Activated CD4-positive, alpha-beta T cell treated with anti-CD3 and anti-CD28 coated beads for 36 hours (primary cell): ENCODE measurements at regions of chr9 and their contacts with region 1.

Region 1: DNA sequence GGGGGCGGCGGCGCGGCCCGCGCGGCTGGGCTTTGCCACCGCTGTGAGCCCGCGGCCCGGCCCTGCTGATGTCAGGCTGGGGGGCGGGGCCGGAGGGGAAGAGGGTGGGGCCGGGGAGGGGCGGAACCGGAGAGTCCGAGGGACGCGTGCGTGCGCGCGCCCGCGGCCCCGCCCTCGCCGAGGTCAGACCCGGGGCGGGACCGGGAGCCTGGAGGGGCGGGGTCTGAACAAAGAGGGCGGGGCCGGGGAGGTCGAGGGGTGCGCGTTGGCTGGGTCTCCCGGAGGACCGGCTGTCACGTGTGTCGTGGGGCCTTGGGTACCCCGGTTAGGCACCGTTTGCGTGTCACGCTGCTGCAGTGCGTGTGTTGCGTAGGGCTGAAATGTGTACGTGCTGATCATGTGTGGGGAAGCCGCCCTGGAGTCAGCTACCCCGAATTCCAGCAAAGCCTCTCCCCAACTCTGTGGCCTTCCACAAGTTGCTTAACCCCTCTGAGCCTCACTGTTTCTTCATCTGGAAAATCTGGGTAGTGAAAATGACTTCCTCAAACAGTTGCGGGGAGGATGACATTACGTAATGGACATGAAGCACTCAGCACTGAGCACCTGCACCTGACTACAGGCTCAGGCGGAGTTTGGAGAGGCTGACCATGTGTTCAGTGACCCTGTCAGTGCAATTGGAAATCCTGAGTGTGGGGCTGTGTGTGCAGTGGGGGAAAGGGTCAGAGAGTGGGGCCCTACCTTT is at the start of gene RALGDS:
- DNase-seq: peak; percentile 96
- ATAC-seq: peak; percentile 82
- H3K4me3 Mint-ChIP-seq: peak within 1 kb of the TSS; percentile 71
- H3K27ac Mint-ChIP-seq: peak within 1 kb of the TSS; percentile 80
- H3K4me1 Mint-ChIP-seq: peaks cover 58% of the 10 kb centered on the region
- H3K27me3 Mint-ChIP-seq: no peaks in the 10 kb centered on the region
- total RNA-seq, gene RALGDS: 65.1 to 78.6 TPM

Region 2: GRCh38 chr9:132694157-132694556 is 427.2 kb before region 1 on chr9:
- CTCF ChIA-PET with region 1: no interaction called
- POLR2A ChIA-PET with region 1: no interaction called
- intact Hi-C with region 1: no loop called
- DNase-seq: peak; percentile 18
- ATAC-seq: peak; percentile 87
- H3K4me3 Mint-ChIP-seq: no peak overlapping the region
- H3K27ac Mint-ChIP-seq: no peak overlapping the region
- H3K4me1 Mint-ChIP-seq: no peaks in the 10 kb centered on the region
- H3K27me3 Mint-ChIP-seq: peaks cover 3% of the 10 kb centered on the region

Region 3: GRCh38 chr9:133030317-133031129 is 90.8 kb before region 1 on chr9 and contains the start of gene GTF3C5:
- CTCF ChIA-PET with region 1: interaction called, 3 read pairs
- POLR2A ChIA-PET with region 1: interaction called, 3 read pairs
- intact Hi-C with region 1: loop called in 1 of 2 experiments (anchors 1 kb)
- DNase-seq: peak; percentile 95
- ATAC-seq: peak; percentile 98
- H3K4me3 Mint-ChIP-seq: peak within 1 kb of the TSS; percentile 94
- H3K27ac Mint-ChIP-seq: peak within 1 kb of the TSS; percentile 95
- H3K4me1 Mint-ChIP-seq: peaks cover 41% of the 10 kb centered on the region
- H3K27me3 Mint-ChIP-seq: no peaks in the 10 kb centered on the region
- total RNA-seq, gene GTF3C5: 81.3 to 84.5 TPM

Region 4: DNA sequence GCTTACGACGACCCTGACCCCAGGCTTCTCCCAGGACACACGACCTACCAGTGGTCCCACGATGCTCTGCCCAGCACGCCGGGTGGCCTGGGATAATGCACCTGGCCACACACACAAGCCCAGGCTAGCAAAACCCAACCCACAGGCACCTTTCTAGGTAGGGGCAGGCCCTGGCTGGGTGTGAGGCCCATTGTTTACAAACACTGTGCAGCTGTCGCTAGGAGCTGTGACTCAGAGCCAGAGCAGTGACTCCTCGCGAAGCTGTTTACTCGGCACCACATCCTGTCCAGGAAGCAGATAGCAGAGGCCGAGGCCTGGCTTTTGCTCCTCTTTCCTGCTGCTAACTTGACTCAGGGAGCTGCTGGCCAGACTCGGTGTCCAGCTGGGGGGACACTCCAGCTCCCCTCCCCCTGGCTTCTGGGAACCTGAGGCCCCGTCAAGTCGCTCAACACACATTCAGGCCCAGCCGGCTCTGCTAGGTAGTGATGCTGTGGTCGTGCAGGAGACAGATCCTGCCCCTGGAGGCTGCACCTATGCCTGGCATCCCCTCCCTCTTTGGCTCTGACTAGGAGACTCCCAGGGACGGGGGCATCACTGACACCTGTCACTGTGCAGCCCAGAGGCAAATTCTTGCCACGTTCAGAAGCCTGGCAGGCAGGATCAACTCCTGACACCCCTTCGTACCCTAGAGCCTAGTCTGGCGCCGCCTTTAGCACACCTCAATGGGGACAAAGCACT is 12.5 kb after region 1 on chr9:
- CTCF ChIA-PET with region 1: interaction called, 6 read pairs
- POLR2A ChIA-PET with region 1: interaction called, 11 read pairs
- intact Hi-C with region 1: loop called in 1 of 2 experiments (anchors 1 kb)
- DNase-seq: peak; percentile 95
- ATAC-seq: peak; percentile 84
- H3K4me3 Mint-ChIP-seq: peak overlapping the region; percentile 41
- H3K27ac Mint-ChIP-seq: peak overlapping the region; percentile 98
- H3K4me1 Mint-ChIP-seq: peaks cover 75% of the 10 kb centered on the region
- H3K27me3 Mint-ChIP-seq: no peaks in the 10 kb centered on the region

Region 5: GRCh38 chr9:133144137-133144903 is 23.0 kb after region 1 on chr9:
- CTCF ChIA-PET with region 1: interaction called, 139 read pairs
- POLR2A ChIA-PET with region 1: interaction called, 6 read pairs
- intact Hi-C with region 1: loop called (anchors 1 kb)
- DNase-seq: peak; percentile 94
- ATAC-seq: peak; percentile 71
- H3K4me3 Mint-ChIP-seq: peak overlapping the region; percentile 57
- H3K27ac Mint-ChIP-seq: peak overlapping the region; percentile 82
- H3K4me1 Mint-ChIP-seq: peaks cover 62% of the 10 kb centered on the region
- H3K27me3 Mint-ChIP-seq: no peaks in the 10 kb centered on the region

Region 6: DNA sequence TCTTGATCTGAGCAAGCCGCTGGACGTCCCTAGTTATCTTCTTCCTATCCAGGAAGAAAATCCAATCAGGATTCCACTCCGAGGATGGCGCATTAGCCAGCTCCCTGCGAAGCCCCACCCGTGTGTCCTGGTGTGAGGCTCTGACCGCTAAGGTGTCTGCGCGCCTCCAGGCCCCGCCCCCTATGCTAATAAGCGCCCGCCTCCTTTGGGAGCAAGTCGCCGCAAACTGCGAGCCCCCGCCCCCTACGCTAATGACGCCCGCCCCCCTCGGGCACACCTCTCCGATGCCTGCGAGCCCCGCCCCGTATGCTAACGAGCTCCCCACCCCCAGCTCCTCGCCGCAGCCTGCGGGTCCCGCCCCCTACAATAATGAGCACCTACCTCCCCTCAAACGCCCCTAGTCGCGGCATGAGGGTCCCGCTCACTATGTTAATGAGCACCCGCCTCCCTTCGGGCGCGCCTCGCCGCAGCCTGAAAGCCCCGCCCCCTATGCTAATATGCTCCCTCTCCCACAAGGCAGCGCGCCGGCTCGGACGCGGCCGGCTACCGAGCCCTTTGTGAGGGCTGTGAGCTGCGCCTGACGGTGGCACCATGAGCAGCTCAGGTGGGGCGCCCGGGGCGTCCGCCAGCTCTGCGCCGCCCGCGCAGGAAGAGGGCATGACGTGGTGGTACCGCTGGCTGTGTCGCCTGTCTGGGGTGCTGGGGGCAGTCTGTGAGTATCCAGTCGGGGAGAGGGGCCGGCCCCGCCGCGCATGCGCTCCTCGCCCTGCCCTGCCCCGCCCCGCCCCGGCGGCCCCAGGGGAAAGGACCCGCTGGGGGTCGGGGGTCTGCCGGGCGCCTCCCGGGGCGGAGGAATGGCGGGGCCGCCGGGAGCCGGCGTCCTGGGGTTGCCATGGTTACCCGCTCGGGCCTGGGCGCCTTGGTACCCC is 338.4 kb after region 1 on chr9 and contains the start of gene CACFD1:
- CTCF ChIA-PET with region 1: no interaction called
- POLR2A ChIA-PET with region 1: no interaction called
- intact Hi-C with region 1: loop called in 1 of 2 experiments (anchors 1 kb)
- DNase-seq: peak; percentile 96
- ATAC-seq: peak; percentile 88
- H3K4me3 Mint-ChIP-seq: peak within 1 kb of the TSS; percentile 74
- H3K27ac Mint-ChIP-seq: peak within 1 kb of the TSS; percentile 42
- H3K4me1 Mint-ChIP-seq: no peaks in the 10 kb centered on the region
- H3K27me3 Mint-ChIP-seq: no peaks in the 10 kb centered on the region
- total RNA-seq, gene CACFD1: 0.87 to 0.90 TPM

Region 7: DNA sequence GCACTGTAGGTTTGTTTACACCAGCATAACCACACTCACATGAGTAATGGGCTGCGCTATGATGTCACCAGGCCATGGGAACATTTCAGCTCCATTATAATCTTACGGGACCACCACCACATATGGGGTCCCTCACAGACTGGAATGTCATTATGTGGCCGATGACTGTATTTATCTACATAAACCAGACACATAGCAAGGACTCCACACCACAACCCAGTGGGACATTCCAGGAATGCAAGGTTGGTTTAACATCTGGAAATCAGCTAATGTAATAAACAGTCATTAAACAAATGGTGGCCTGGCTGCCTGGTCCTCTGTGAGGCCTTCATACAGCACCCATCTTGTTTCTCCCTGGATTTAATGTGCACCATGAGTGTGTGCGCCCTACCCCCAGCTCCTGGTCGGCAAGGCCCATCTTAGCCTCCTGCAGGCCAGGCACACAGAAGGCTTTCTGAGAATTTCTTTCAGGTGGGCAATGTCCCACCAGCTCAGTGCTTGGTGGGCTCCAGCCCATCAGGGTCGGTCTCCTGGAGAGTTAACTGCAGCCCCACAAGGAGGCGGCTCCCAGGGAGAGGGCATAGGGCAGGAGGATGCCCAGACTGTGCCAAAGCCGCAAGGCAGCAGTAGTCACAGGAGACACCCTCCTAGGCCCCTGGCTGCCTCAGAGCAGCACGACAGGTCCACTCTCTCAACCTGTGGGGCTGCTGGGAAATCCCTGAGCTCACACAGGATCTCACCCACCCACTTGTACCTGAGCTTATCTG is 652.7 kb after region 1 on chr9:
- CTCF ChIA-PET with region 1: no interaction called
- POLR2A ChIA-PET with region 1: no interaction called
- intact Hi-C with region 1: no loop called
- DNase-seq: no peak
- ATAC-seq: no peak
- H3K4me3 Mint-ChIP-seq: no peak overlapping the region
- H3K27ac Mint-ChIP-seq: no peak overlapping the region
- H3K4me1 Mint-ChIP-seq: no peaks in the 10 kb centered on the region
- H3K27me3 Mint-ChIP-seq: no peaks in the 10 kb centered on the region

Region 8: GRCh38 chr9:134135343-134136118 is 1014.2 kb after region 1 on chr9 and contains the start of gene WDR5:
- CTCF ChIA-PET with region 1: no interaction called
- POLR2A ChIA-PET with region 1: no interaction called
- intact Hi-C with region 1: loop called in 1 of 2 experiments (anchors 5 kb)
- DNase-seq: peak; percentile 95
- ATAC-seq: peak; percentile 78
- H3K4me3 Mint-ChIP-seq: peak within 1 kb of the TSS; percentile 98
- H3K27ac Mint-ChIP-seq: peak within 1 kb of the TSS; percentile 90
- H3K4me1 Mint-ChIP-seq: peaks cover 31% of the 10 kb centered on the region
- H3K27me3 Mint-ChIP-seq: no peaks in the 10 kb centered on the region
- total RNA-seq, gene WDR5: 51.4 to 59.2 TPM